Activated CD8-positive, alpha-beta T cell treated with anti-CD3 and anti-CD28 coated beads, Interleukin-2, amount 10 ng/mL, durations not matched to agents 7 days and 5 days (primary cell): ENCODE measurements at regions of chr20 and their contacts with region 1.

Region 1: DNA sequence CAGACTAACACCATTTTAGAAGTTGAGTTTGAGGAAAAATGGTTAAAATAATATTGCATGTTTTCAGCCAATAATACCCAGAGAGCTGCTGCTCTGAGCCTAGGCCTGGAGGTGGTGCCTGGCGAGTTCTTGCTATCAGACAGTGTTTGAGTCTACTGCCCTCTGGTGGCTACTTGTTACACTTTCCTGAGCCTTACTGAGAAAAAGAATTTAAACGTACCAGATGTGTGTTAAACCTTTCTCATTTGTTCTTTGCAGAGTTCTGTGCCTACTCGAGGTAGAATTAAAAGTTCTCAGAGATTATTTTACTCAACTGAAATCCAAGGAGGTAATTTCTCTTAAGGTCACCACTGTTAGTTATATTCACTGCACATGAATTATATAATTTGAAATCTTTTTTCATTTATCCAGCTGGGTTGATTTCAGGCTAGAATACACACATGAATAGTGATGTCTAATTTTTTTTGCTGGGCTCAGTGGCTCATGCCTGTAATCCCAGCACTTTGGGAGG is 38.2 kb downstream of the SHLD1 start:
- DNase-seq: peak; percentile 89
- ATAC-seq: peak; percentile 96
- H3K4me3 Mint-ChIP-seq: no peak overlapping the region
- H3K27ac Mint-ChIP-seq: no peak overlapping the region
- H3K4me1 Mint-ChIP-seq: peaks cover 12% of the 10 kb centered on the region
- H3K27me3 Mint-ChIP-seq: no peaks in the 10 kb centered on the region

Region 2: DNA sequence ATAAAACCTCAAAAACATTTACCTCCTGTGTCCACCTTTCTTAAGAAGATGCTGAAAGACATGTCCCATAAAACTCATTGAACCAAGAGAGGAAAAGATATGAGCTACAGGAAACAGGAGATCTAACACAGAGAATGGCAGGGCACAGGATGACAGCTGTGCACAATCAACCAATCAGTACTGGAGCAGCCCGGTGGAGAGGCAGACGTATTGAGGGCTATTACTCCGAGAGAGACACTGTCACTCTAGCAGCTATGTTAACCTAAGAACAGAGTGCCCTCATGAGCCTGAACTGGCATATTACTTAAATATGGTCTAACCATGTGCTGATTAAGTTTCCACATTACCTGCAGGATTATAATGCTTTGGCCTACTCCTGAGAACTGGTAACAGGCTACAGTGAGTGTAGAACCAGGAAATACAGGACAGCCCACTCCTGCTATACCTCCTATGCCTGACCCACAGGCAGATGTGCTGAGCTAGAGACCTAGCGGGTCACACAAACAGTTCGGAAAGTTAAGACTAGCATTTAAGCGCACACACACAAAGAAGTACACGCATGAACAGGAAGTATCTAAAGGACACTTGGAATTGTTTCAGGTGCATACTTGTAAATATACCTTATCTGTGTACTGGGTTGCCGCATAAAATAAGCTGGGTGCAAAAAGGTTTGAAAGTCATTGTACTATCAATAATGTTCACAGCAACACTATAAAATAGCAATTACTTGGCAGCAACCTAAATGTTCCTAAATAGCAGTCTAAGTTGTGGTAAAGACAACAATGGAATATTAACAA is 237.5 kb before region 1 on chr20:
- CTCF ChIA-PET with region 1: interaction called, 93 read pairs
- POLR2A ChIA-PET with region 1: no interaction called
- DNase-seq: no peak
- ATAC-seq: peak; percentile 42
- H3K4me3 Mint-ChIP-seq: no peak overlapping the region
- H3K27ac Mint-ChIP-seq: no peak overlapping the region
- H3K4me1 Mint-ChIP-seq: no peaks in the 10 kb centered on the region
- H3K27me3 Mint-ChIP-seq: no peaks in the 10 kb centered on the region

Region 3: GRCh38 chr20:5557123-5557522 is 231.3 kb before region 1 on chr20:
- CTCF ChIA-PET with region 1: interaction called, 93 read pairs
- POLR2A ChIA-PET with region 1: no interaction called
- DNase-seq: peak; percentile 73
- ATAC-seq: peak; percentile 82
- H3K4me3 Mint-ChIP-seq: no peak overlapping the region
- H3K27ac Mint-ChIP-seq: peak overlapping the region; percentile 16
- H3K4me1 Mint-ChIP-seq: no peaks in the 10 kb centered on the region
- H3K27me3 Mint-ChIP-seq: no peaks in the 10 kb centered on the region

Region 4: DNA sequence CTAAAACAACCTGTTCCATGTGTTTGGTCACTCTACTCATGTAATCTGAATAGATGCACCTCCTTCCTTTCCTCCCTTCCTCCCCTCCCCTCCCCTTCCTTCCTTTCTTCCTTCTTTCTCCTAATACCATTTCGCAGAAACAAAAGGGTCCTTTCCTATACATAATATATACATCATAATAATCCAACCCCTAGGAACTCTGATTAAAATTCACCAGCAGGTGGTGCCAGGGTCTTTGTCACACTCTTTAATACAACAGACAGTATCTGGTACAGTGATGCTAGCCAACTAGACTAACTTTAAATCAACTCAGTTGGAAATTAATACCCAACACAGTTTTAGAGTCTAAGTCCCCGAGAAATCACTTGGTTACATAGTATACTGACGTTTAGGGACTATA is 219.4 kb before region 1 on chr20:
- CTCF ChIA-PET with region 1: interaction called, 92 read pairs
- POLR2A ChIA-PET with region 1: no interaction called
- DNase-seq: peak; percentile 68
- ATAC-seq: peak; percentile 87
- H3K4me3 Mint-ChIP-seq: no peak overlapping the region
- H3K27ac Mint-ChIP-seq: peak overlapping the region; percentile 37
- H3K4me1 Mint-ChIP-seq: peaks cover 15% of the 10 kb centered on the region
- H3K27me3 Mint-ChIP-seq: no peaks in the 10 kb centered on the region

Region 5: DNA sequence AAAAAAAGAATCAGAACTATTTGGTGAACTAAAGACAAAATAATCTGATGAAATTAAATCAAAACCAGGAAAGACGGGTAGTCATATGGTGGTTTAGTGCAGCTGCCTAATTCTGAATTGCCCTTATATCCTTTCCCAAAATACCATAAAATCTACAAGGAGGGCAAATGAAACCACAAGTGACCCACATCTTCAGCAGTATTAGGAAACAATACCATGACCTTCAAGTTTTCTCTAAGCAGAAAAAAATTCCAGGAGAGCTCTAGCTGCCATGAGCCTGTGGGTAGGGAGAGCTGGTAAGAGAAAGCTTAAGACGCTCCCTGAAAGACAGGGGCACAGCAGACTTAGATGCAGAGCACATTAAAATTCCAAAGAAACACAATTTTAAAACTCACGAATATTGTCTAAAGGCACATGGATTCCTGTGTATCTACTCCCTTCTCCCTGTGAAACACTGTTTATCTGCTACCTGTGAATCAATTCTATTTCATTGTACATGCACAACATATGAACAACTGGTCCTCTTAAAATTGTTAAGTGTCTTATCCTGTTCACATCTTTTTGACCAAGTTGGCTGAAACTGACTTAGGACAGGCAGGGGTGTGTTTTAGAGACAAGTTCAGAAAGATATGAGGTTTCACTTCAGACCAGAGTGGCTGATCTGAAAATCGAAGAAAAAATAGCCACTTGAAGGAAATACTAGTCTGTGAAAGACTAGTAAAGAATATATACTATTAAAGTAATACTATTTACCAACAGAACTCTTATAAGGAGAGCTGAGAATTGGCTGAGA is 191.8 kb before region 1 on chr20:
- CTCF ChIA-PET with region 1: interaction called, 29 read pairs
- POLR2A ChIA-PET with region 1: no interaction called
- DNase-seq: no peak
- ATAC-seq: no peak
- H3K4me3 Mint-ChIP-seq: no peak overlapping the region
- H3K27ac Mint-ChIP-seq: no peak overlapping the region
- H3K4me1 Mint-ChIP-seq: peaks cover 57% of the 10 kb centered on the region
- H3K27me3 Mint-ChIP-seq: no peaks in the 10 kb centered on the region

Region 6: DNA sequence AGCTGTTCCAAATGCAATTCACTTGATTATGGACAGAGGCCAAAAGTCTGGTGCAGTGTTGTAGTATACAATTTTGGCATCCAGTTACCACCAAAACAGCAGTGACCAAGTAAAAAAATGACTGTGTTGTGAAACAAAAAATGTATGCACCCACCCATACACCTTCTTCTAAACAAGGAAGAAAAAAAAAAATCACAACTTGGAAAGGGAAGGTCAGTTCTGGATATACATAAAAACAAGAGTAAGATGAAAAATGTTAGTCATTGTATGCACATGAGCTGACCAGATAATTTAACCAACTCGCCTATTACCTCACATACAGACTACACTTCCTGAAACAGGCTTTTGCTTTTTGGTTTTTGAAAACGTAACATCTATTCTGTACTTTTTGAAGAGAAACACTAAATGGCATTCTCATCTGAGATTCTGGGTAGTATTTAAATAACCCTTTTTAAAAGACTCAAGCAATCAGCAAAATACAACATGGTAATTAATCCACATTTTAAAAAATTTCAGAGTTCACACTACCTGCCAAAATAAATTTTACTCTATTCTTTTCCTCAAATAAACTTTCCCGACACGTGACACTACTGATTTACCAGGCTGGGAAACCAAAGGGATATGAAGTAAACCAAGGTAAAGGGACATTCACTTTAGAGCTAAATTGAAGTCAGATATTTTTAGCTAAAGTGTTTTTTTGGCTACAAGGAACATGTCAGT is 179.8 kb before region 1 on chr20:
- CTCF ChIA-PET with region 1: interaction called, 11 read pairs
- POLR2A ChIA-PET with region 1: no interaction called
- DNase-seq: no peak
- ATAC-seq: no peak
- H3K4me3 Mint-ChIP-seq: peak overlapping the region; percentile 97
- H3K27ac Mint-ChIP-seq: peak overlapping the region; percentile 78
- H3K4me1 Mint-ChIP-seq: peaks cover 60% of the 10 kb centered on the region
- H3K27me3 Mint-ChIP-seq: no peaks in the 10 kb centered on the region